Adrenal gland (tissue), 19 donors: ENCODE measurements at regions of chr6 and their contacts with region 1.

Region 1: GRCh38 chr6:36765594-36766398 is 68.2 kb downstream of the RAB44 start:
- DNase-seq: peak; percentile 83 to 93 (median 88)
- H3K4me3 ChIP-seq: no peak overlapping the region
- H3K27ac ChIP-seq: no peak overlapping the region
- H3K4me1 ChIP-seq: peaks cover 0 to 6% of the 10 kb centered on the region in 2 donors
- H3K27me3 ChIP-seq: no peaks in the 10 kb centered on the region
- CTCF ChIP-seq: peak; percentile 81 to 97 (median 92)
- POLR2A ChIP-seq: no peak

Region 2: DNA sequence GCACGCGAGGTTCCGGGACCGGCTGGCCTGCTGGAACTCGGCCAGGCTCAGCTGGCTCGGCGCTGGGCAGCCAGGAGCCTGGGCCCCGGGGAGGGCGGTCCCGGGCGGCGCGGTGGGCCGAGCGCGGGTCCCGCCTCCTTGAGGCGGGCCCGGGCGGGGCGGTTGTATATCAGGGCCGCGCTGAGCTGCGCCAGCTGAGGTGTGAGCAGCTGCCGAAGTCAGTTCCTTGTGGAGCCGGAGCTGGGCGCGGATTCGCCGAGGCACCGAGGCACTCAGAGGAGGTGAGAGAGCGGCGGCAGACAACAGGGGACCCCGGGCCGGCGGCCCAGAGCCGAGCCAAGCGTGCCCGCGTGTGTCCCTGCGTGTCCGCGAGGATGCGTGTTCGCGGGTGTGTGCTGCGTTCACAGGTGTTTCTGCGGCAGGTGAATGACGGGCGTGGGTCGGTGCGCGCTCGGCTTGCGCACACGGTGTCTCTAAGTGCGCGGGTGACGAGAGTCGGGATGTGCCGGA is 87.2 kb before region 1 on chr6 and contains the start of gene CDKN1A:
- intact Hi-C with region 1: no loop called
- DNase-seq: peak; percentile 92 to 96 (median 94)
- H3K4me3 ChIP-seq: peak within 1 kb of the TSS; percentile 5 to 97 (median 66)
- H3K27ac ChIP-seq: peak within 1 kb of the TSS; percentile 85 to 98 (median 95)
- H3K4me1 ChIP-seq: peaks cover 13 to 51% of the 10 kb centered on the region in 2 donors
- H3K27me3 ChIP-seq: no peaks in the 10 kb centered on the region
- CTCF ChIP-seq: peak in 3 of 6 experiments; percentile 20 to 30 (median 22)
- POLR2A ChIP-seq: peak; percentile 99
- total RNA-seq, gene CDKN1A: 44.7 to 154 (median 87.6) TPM

Region 3: GRCh38 chr6:36851149-36851614 is 85.4 kb after region 1 on chr6:
- intact Hi-C with region 1: loop called (anchors 5 kb)
- DNase-seq: peak; percentile 61 to 85 (median 72)
- H3K4me3 ChIP-seq: no peak overlapping the region
- H3K27ac ChIP-seq: peak overlapping the region in 2 of 5 donors; percentile 12 to 14
- H3K4me1 ChIP-seq: peaks cover 0 to 22% of the 10 kb centered on the region in 2 donors
- H3K27me3 ChIP-seq: no peaks in the 10 kb centered on the region
- CTCF ChIP-seq: peak; percentile 67 to 79 (median 73)
- POLR2A ChIP-seq: no peak

Region 4: DNA sequence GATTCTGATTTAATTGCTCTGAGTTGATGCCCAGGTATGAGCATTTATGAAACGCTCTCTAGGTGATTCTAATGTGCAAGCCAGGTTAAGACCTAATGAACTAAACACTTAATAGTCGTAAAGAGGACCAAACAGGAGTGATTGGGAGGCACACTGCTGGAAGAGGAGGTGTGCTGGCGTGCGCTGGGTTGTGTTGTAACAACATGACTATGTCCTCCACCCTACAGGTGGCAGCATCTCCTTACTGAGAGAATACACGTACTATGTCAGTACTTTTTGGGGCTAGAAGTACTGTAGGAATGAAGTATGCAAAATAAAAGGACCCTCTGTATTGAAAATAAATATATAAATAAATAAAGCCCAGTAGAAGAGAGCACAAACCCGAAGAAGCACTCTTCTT is 131.8 kb after region 1 on chr6:
- intact Hi-C with region 1: no loop called
- DNase-seq: peak in 1 of 7 donors; percentile 33
- H3K4me3 ChIP-seq: no peak overlapping the region
- H3K27ac ChIP-seq: no peak overlapping the region
- H3K4me1 ChIP-seq: peaks cover 8 to 9% of the 10 kb centered on the region in 2 donors
- H3K27me3 ChIP-seq: no peaks in the 10 kb centered on the region
- CTCF ChIP-seq: peak in 2 of 6 experiments; percentile 15 to 17
- POLR2A ChIP-seq: no peak

Region 5: DNA sequence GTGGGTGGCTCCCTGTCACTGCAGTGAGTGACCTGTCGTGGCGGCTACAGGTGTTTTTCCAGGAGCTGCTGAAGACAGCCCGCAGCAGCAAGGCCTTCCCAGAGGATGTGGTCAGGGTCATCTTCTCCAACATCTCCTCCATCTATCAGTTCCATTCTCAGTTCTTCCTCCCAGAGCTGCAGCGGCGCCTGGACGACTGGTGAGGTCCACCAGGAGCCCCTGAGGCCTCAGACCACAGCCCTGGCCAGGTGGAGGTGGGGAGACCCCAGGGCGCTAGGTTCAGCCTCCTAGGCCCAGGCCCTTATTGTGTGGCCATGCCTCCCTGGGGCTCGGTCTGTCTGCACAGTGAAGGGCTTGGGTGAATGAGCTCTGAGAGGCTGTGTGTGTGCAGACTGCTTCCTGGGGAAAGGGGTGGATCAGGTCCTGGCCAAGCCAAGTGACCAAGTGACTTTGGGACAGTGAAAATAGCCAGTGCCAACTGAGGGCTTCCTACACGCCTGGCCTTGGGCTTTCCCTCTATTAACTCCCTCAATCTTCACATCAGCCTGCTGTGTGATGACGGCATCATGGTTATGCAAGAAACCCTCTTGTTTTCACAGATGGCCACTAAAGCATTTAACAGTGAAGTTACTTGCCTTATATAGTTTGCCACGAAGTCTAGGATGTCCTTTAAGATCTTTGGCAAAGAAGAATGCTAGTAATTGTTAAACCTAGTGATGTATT is 246.0 kb after region 1 on chr6:
- intact Hi-C with region 1: loop called (anchors 5 kb)
- DNase-seq: peak in 5 of 7 donors; percentile 50 to 80 (median 55)
- H3K4me3 ChIP-seq: no peak overlapping the region
- H3K27ac ChIP-seq: no peak overlapping the region
- H3K4me1 ChIP-seq: no peaks in the 10 kb centered on the region
- H3K27me3 ChIP-seq: no peaks in the 10 kb centered on the region
- CTCF ChIP-seq: no peak
- POLR2A ChIP-seq: no peak

Region 6: GRCh38 chr6:37018198-37019064 is 252.6 kb after region 1 on chr6:
- intact Hi-C with region 1: loop called (anchors 5 kb)
- DNase-seq: peak; percentile 91 to 98 (median 94)
- H3K4me3 ChIP-seq: no peak overlapping the region
- H3K27ac ChIP-seq: peak overlapping the region in 1 of 5 donors; percentile 56
- H3K4me1 ChIP-seq: peaks cover 0 to 15% of the 10 kb centered on the region in 2 donors
- H3K27me3 ChIP-seq: no peaks in the 10 kb centered on the region
- CTCF ChIP-seq: peak; percentile 78 to 96 (median 90)
- POLR2A ChIP-seq: no peak

Region 7: DNA sequence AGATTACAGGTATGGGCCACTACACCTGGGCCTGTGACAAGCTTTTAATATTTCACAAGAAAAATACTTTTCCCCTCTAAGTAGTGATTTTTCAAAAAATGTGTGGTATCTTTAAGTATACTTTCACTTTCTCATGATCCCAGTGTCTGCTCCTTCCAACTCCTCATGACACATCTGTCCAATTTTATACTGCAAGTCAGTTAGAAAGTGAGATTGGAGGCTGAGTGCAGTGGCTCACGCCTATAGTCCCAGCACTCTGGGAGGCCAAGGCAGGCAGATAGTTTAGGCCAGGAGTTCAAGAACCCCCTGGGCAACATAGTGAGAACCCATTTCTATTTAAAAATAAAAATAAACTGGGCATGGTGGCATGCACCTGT is 424.4 kb after region 1 on chr6:
- intact Hi-C with region 1: loop called in 1 of 2 experiments (anchors 10 kb)
- DNase-seq: no peak
- H3K4me3 ChIP-seq: no peak overlapping the region
- H3K27ac ChIP-seq: peak overlapping the region in 1 of 5 donors; percentile 15
- H3K4me1 ChIP-seq: no peaks in the 10 kb centered on the region
- H3K27me3 ChIP-seq: no peaks in the 10 kb centered on the region
- CTCF ChIP-seq: no peak
- POLR2A ChIP-seq: no peak

Region 8: GRCh38 chr6:37207903-37208456 is 442.2 kb after region 1 on chr6:
- intact Hi-C with region 1: loop called in 1 of 2 experiments (anchors 5 kb)
- DNase-seq: peak; percentile 75 to 96 (median 87)
- H3K4me3 ChIP-seq: no peak overlapping the region
- H3K27ac ChIP-seq: no peak overlapping the region
- H3K4me1 ChIP-seq: peaks cover 0 to 9% of the 10 kb centered on the region in 2 donors
- H3K27me3 ChIP-seq: no peaks in the 10 kb centered on the region
- CTCF ChIP-seq: peak; percentile 60 to 92 (median 77)
- POLR2A ChIP-seq: no peak